Ascending aorta (tissue), 2 donors: ENCODE measurements at regions of chr4 and their contacts with region 1.

Region 1: GRCh38 chr4:143513306-143514168 is at the start of gene SMARCA5:
- DNase-seq: peak; percentile 94 to 99
- H3K4me3 ChIP-seq: peak within 1 kb of the TSS; percentile 65 to 84
- H3K27ac ChIP-seq: peak within 1 kb of the TSS; percentile 97 to 98
- H3K4me1 ChIP-seq: peaks cover 0 to 14% of the 10 kb centered on the region in 2 donors
- H3K27me3 ChIP-seq: no peaks in the 10 kb centered on the region
- CTCF ChIP-seq: no peak
- total RNA-seq, gene SMARCA5: 15.5 TPM

Region 2: DNA sequence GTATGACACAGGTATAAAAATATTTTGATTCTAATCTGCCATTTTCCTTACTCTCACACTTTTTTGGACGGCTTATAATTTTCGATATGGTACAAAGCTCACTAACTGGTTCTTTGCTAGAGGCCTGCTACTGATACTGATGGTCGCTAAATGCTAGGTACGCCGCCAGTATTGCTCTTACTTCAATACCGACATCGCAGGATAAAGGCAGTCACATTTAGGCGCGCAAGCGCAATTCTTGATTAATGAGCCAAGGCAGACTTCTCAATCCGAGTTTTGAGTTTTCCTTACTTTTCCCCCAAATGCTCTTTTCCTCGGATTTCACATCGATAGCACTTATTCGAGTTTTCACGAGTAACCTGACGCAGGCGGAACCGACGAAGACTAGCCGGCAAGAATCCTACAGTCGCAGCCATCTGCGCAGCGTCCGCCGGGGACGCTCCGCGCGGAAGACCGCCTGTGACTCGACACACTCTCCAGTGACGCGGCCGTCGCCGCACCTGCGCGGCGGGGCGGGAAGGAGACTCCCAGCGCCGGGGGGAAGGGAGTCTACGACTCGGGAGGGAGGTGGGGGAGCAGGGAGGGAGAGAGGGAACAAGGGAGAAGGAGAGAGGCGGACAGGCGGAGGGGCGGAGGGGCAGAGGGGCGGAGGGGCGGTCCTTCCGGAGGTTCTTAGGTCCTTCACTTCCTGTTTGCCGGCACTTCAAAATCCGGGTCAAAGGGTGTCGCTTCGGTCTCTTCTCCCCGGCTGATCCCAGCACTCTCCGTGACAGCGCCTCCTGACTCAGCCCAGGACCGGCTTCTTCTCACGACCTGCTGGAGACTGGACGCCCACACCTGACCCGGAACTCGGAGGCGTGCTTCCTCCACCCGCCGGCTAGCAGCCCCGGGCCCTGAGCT is 329.1 kb before region 1 on chr4 and contains the start of gene USP38:
- intact Hi-C with region 1: loop called (anchors 1 kb)
- DNase-seq: peak; percentile 66 to 95
- H3K4me3 ChIP-seq: peak within 1 kb of the TSS; percentile 77 to 80
- H3K27ac ChIP-seq: peak within 1 kb of the TSS; percentile 94 to 95
- H3K4me1 ChIP-seq: peaks cover 6 to 23% of the 10 kb centered on the region in 2 donors
- H3K27me3 ChIP-seq: no peaks in the 10 kb centered on the region
- CTCF ChIP-seq: no peak
- total RNA-seq, gene USP38: 6.7 TPM

Region 3: DNA sequence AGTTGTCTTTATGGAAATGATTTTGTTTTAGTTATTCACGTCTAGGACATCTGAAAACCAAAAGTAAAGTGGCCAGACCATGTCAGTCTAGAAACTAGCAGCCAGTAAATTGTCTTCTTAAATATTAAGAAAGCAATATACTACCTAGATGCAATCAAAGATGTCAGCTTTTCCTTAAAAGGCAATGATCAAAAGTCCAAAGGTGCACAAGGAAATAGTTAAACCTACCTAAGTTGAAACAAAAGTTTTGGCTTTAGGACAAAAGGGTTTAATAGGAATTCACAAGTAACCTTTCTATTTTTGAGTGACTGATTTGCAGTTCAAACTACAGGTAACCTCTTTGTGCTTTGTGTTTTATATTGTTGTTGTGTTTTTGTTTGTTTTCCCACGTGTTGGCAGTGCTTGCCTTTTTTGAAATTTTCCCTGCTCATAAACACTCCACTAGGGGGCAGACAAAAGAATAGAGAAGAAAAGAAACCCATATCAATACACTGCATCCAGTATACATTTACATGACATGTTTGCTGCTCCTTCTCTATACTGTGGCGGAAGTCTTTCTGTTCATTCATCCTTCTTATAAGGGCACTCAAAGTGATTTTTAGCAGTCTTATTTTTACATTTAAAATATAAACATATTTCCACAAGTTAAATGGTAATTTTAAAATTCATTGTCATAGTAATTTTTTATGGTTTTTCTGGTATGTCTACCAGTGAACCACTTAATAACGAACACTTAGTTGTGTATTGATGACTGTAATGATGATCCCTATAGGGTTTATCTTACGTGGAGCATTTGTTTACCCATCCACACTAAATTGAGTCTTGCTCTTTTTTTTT is 114.2 kb before region 1 on chr4:
- intact Hi-C with region 1: no loop called
- DNase-seq: no peak
- H3K4me3 ChIP-seq: no peak overlapping the region
- H3K27ac ChIP-seq: peak overlapping the region; percentile 31 to 70
- H3K4me1 ChIP-seq: peaks cover 6 to 53% of the 10 kb centered on the region in 2 donors
- H3K27me3 ChIP-seq: no peaks in the 10 kb centered on the region
- CTCF ChIP-seq: peak; percentile 15 to 44 (median 41)